ENCODE measurements at regions of chr6 and their contacts with region 1.

Region 1: GRCh38 chr6:3800850-3801591 is 48.2 kb upstream of the FAM50B start:
- DNase-seq: no peak
- ATAC-seq: no peak
- H3K4me3 ChIP-seq: no peak overlapping the region
- H3K4me3 Mint-ChIP-seq: no peak overlapping the region
- H3K27ac ChIP-seq: no peak overlapping the region
- H3K27ac Mint-ChIP-seq: no peak overlapping the region
- H3K4me1 ChIP-seq: no peaks in the 10 kb centered on the region
- H3K4me1 Mint-ChIP-seq: no peaks in the 10 kb centered on the region
- H3K27me3 ChIP-seq: no peaks in the 10 kb centered on the region
- H3K27me3 Mint-ChIP-seq: peaks cover 7% of the 10 kb centered on the region
- CTCF ChIP-seq: no peak

Region 2: GRCh38 chr6:3781504-3781903 is 19.5 kb before region 1 on chr6:
- CTCF ChIA-PET with region 1: no interaction called
- POLR2A ChIA-PET with region 1: no interaction called
- intact Hi-C with region 1: loop called in 1 of 2 experiments (anchors 2 kb)
- DNase-seq: no peak
- ATAC-seq: no peak
- H3K4me3 ChIP-seq: no peak overlapping the region
- H3K4me3 Mint-ChIP-seq: no peak overlapping the region
- H3K27ac ChIP-seq: no peak overlapping the region
- H3K27ac Mint-ChIP-seq: no peak overlapping the region
- H3K4me1 ChIP-seq: no peaks in the 10 kb centered on the region
- H3K4me1 Mint-ChIP-seq: no peaks in the 10 kb centered on the region
- H3K27me3 ChIP-seq: peaks cover 0 to 5% of the 10 kb centered on the region in 2 experiments
- H3K27me3 Mint-ChIP-seq: peaks cover 12% of the 10 kb centered on the region
- CTCF ChIP-seq: no peak

Measured in CD8-positive, alpha-beta T cell (primary cell).